Endothelial cell of umbilical vein (primary cell): ENCODE measurements at regions of chr20 and their contacts with region 1.

Region 1: DNA sequence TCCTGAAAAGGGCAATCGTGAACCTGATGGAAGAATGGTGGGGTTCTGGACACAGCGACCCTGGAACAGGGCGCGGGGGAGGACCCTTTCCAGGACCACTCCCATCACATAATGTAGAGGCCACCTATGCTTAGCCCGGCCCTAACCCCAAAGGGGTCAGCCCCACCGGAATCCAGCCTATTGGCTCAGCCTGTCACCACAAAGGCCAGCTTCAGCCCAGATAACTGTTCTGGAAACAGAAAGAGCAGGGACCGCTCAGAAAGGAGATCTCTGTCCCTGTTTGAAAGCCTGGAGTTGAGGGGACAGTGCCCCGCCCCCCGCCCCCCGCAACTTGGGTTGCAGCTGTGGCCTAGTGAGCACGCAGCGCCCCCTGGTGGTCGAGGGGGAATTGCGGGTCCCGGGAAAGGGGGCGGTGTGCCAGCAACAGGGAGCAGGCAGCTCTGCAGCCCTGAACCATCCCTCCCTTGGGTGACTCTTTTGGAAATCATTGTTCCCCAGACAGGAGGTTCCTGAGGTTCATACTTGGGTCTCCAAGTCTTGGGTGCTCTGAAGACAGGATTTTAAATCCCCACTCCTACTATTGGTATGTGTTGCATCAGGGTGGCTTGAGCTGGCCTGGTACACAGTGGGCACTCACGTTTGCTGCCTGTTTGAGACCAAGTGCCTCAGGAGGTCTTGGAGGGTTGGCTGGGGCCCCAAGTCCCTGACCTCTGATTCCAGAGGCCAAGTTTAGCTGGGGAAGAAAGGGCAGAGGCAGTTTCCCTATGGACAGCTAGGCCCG is 1.5 kb downstream of the SIGLEC1 start:
- DNase-seq: peak; percentile 58
- H3K4me3 ChIP-seq: no peak overlapping the region
- H3K27ac ChIP-seq: no peak overlapping the region
- H3K4me1 ChIP-seq: no peaks in the 10 kb centered on the region
- H3K27me3 ChIP-seq: no peaks in the 10 kb centered on the region
- CTCF ChIP-seq: peak; percentile 91 to 97
- POLR2A ChIP-seq: no peak

Region 2: GRCh38 chr20:3563548-3564177 is 147.2 kb before region 1 on chr20:
- CTCF ChIA-PET with region 1: interaction called, 73 read pairs
- POLR2A ChIA-PET with region 1: no interaction called
- dilution Hi-C with region 1: no loop called
- intact Hi-C with region 1: no loop called
- DNase-seq: peak; percentile 58
- H3K4me3 ChIP-seq: no peak overlapping the region
- H3K27ac ChIP-seq: no peak overlapping the region
- H3K4me1 ChIP-seq: no peaks in the 10 kb centered on the region
- H3K27me3 ChIP-seq: no peaks in the 10 kb centered on the region
- CTCF ChIP-seq: peak; percentile 48 to 55
- POLR2A ChIP-seq: no peak

Region 3: GRCh38 chr20:3679749-3680700 is 30.9 kb before region 1 on chr20:
- CTCF ChIA-PET with region 1: interaction called, 346 read pairs
- POLR2A ChIA-PET with region 1: interaction called, 8 read pairs
- dilution Hi-C with region 1: no loop called
- intact Hi-C with region 1: loop called (anchors 1 kb)
- DNase-seq: no peak
- H3K4me3 ChIP-seq: no peak overlapping the region
- H3K27ac ChIP-seq: no peak overlapping the region
- H3K4me1 ChIP-seq: no peaks in the 10 kb centered on the region
- H3K27me3 ChIP-seq: peaks cover 25 to 33% of the 10 kb centered on the region in 2 experiments
- CTCF ChIP-seq: no peak
- POLR2A ChIP-seq: no peak

Region 4: GRCh38 chr20:3696200-3696599 is 14.7 kb before region 1 on chr20:
- CTCF ChIA-PET with region 1: interaction called, 112 read pairs
- POLR2A ChIA-PET with region 1: no interaction called
- dilution Hi-C with region 1: no loop called
- intact Hi-C with region 1: no loop called
- DNase-seq: no peak
- H3K4me3 ChIP-seq: no peak overlapping the region
- H3K27ac ChIP-seq: no peak overlapping the region
- H3K4me1 ChIP-seq: no peaks in the 10 kb centered on the region
- H3K27me3 ChIP-seq: no peaks in the 10 kb centered on the region
- CTCF ChIP-seq: peak in 1 of 2 donors; percentile 34
- POLR2A ChIP-seq: no peak

Region 5: GRCh38 chr20:3753098-3753980 is 42.4 kb after region 1 on chr20:
- CTCF ChIA-PET with region 1: interaction called, 75 read pairs
- POLR2A ChIA-PET with region 1: no interaction called
- dilution Hi-C with region 1: no loop called
- intact Hi-C with region 1: loop called (anchors 1 kb)
- DNase-seq: peak; percentile 66
- H3K4me3 ChIP-seq: no peak overlapping the region
- H3K27ac ChIP-seq: no peak overlapping the region
- H3K4me1 ChIP-seq: no peaks in the 10 kb centered on the region
- H3K27me3 ChIP-seq: no peaks in the 10 kb centered on the region
- CTCF ChIP-seq: peak; percentile 79 to 89
- POLR2A ChIP-seq: peak; percentile 55

Region 6: GRCh38 chr20:3781153-3781910 is 70.4 kb after region 1 on chr20 and contains the start of gene SPEF1:
- CTCF ChIA-PET with region 1: interaction called, 32 read pairs
- POLR2A ChIA-PET with region 1: no interaction called
- dilution Hi-C with region 1: no loop called
- intact Hi-C with region 1: loop called (anchors 1 kb)
- DNase-seq: peak; percentile 90
- H3K4me3 ChIP-seq: peak within 1 kb of the TSS in 2 of 3 experiments; percentile 3 to 17
- H3K27ac ChIP-seq: no peak within 1 kb of the TSS
- H3K4me1 ChIP-seq: peaks cover 28% of the 10 kb centered on the region
- H3K27me3 ChIP-seq: peaks cover 8 to 19% of the 10 kb centered on the region in 2 experiments
- CTCF ChIP-seq: peak; percentile 42 to 56
- POLR2A ChIP-seq: peak; percentile 68
- total RNA-seq, gene SPEF1: 0.32 and 0.44 TPM in 2 replicates